Activated CD4-positive, alpha-beta T cell treated with anti-CD3 and anti-CD28 coated beads, Interleukin-2, amount 10 ng/mL, durations not matched to agents 24 days and 14 days (primary cell): ENCODE measurements at regions of chr14 and their contacts with region 1.

Region 1: GRCh38 chr14:55102141-55102621 is 26.9 kb upstream of the LGALS3 start:
- DNase-seq: peak; percentile 84
- H3K4me3 Mint-ChIP-seq: peak overlapping the region; percentile 73
- H3K27ac Mint-ChIP-seq: peak overlapping the region; percentile 94
- H3K4me1 Mint-ChIP-seq: peaks cover 46% of the 10 kb centered on the region
- H3K27me3 Mint-ChIP-seq: no peaks in the 10 kb centered on the region

Region 2: GRCh38 chr14:54669721-54670561 is 432.2 kb before region 1 on chr14:
- intact Hi-C with region 1: no loop called
- DNase-seq: peak; percentile 71
- H3K4me3 Mint-ChIP-seq: peak overlapping the region; percentile 6
- H3K27ac Mint-ChIP-seq: peak overlapping the region; percentile 8
- H3K4me1 Mint-ChIP-seq: peaks cover 29% of the 10 kb centered on the region
- H3K27me3 Mint-ChIP-seq: peaks cover 22% of the 10 kb centered on the region

Region 3: GRCh38 chr14:54908190-54908589 is 194.0 kb before region 1 on chr14:
- intact Hi-C with region 1: no loop called
- DNase-seq: peak; percentile 78
- H3K4me3 Mint-ChIP-seq: peak overlapping the region; percentile 66
- H3K27ac Mint-ChIP-seq: peak overlapping the region; percentile 85
- H3K4me1 Mint-ChIP-seq: peaks cover 29% of the 10 kb centered on the region
- H3K27me3 Mint-ChIP-seq: no peaks in the 10 kb centered on the region

Region 4: DNA sequence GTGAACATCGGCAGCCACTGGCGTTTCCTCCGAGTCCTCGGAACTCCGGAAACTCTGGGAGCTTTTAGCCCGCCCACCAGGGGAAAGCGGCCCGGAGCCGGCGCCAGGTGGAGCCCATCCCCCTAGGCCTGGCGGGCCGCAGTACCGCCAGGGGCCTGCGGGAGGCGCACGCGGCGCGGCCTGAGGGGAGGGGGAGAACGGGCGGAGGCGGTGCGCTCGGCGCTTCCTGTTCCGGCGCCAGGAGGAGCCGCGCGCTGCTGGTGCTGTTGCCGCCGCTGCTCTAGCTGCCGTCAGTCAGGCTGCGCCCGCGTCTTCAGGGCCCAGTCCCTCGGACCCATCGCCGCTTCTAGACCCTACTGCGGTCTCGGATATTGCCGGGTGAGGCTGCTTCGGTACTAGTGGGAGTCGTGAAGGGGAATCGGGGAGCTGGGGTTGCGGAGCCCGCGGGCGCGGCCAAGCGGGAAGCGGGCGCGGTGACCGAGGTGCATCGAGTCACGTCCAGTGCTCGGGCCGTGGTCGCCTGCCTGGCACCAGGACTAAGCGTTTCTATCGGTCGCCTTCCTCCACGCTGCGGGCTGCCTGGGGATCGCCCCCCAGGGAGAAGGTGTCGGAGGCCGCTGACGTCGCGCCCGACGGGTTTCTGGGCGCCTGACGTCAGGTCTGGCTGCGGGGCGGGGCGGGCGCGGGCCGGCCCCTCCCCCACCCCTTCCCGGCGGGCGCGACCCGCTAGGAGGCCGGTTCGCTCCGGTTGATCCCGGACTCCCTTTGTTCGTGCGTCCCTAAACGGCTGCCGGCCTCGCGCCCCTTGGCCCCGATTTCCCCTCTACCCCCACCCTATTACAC is 50.5 kb before region 1 on chr14 and contains the start of gene MAPK1IP1L:
- intact Hi-C with region 1: loop called (anchors 2 kb)
- DNase-seq: peak; percentile 98
- H3K4me3 Mint-ChIP-seq: peak within 1 kb of the TSS; percentile 93
- H3K27ac Mint-ChIP-seq: peak within 1 kb of the TSS; percentile 96
- H3K4me1 Mint-ChIP-seq: peaks cover 36% of the 10 kb centered on the region
- H3K27me3 Mint-ChIP-seq: no peaks in the 10 kb centered on the region
- total RNA-seq, gene MAPK1IP1L: 142 and 144 TPM in 2 replicates

Region 5: DNA sequence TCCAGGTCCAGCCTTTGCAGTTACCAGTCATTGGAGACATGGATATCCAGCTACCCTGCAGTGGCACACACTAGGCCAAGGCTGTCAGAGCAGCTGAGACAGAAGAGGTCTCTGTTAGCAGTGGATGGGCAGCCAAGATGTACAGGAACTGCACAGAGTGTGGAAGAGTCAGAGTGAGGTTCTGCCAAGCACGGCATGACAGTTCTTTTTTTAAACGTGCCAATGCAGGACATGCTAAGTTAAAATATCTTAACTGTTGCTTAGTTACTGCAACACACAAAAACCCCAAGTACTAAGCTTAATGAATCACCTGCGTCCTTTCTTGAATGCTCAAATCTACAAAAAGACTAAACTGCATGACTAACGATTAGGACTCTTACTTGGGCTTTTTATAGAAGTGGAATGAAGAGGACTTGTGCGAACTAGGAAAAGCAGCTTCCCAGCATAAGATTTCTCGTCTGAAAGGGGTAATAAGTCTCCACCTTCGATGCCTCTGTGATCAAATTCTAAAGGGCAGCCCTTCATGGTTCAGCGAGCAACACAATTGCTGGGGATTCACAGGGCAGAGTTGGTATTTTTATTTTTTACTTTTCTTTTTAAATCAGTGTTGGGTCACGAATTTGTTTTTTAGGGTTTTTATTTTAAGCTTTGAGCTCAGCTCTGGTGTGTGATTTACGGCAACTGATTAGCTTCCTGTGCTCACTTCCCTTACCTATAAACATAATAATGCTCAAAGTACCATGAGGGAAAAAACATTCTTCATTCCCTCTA is 30.1 kb before region 1 on chr14:
- intact Hi-C with region 1: no loop called
- DNase-seq: peak; percentile 60
- H3K4me3 Mint-ChIP-seq: peak overlapping the region; percentile 45
- H3K27ac Mint-ChIP-seq: peak overlapping the region; percentile 61
- H3K4me1 Mint-ChIP-seq: peaks cover 23% of the 10 kb centered on the region
- H3K27me3 Mint-ChIP-seq: no peaks in the 10 kb centered on the region

Region 6: GRCh38 chr14:55129428-55130195 is 27.4 kb after region 1 on chr14:
- intact Hi-C with region 1: loop called (anchors 1 kb)
- DNase-seq: peak; percentile 83
- H3K4me3 Mint-ChIP-seq: peak overlapping the region; percentile 82
- H3K27ac Mint-ChIP-seq: peak overlapping the region; percentile 63
- H3K4me1 Mint-ChIP-seq: peaks cover 29% of the 10 kb centered on the region
- H3K27me3 Mint-ChIP-seq: peaks cover 20% of the 10 kb centered on the region

Region 7: GRCh38 chr14:55333711-55334485 is 231.7 kb after region 1 on chr14:
- intact Hi-C with region 1: loop called (anchors 10 kb)
- DNase-seq: no peak
- H3K4me3 Mint-ChIP-seq: peak overlapping the region; percentile 77
- H3K27ac Mint-ChIP-seq: peak overlapping the region; percentile 87
- H3K4me1 Mint-ChIP-seq: peaks cover 68% of the 10 kb centered on the region
- H3K27me3 Mint-ChIP-seq: no peaks in the 10 kb centered on the region

Region 8: DNA sequence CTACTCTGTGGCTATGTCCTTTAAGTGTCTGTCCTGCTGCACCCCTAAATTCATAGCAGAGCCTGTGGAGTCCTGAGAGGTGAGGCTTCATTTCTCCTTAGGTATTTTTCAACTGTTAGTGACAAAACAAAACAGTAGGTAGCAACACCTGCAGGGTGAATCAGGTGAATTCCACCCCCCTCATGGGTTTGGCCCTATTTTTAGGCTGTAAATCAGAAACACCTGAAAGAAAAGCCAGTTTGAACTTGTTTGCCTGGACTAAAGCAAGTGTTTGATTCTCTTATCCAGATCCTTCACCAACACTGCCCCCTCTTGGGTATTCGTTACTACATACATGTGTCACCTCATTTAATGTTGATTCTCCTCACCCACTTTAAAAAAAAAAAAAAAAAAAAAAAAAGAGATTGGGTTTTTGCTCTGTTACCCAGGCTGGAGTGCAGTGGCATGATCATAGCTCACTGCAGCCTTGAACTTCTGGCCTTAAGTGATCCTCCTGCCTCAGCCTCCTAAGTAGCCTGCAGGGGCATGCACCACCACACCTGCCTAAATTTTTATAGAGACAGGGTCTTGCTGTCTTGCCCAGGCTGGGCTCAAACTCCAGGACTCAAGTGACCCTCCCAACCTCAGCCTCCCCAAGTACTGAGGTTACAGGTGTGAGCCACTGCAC is 328.0 kb after region 1 on chr14:
- intact Hi-C with region 1: loop called (anchors 10 kb)
- DNase-seq: peak; percentile 86
- H3K4me3 Mint-ChIP-seq: no peak overlapping the region
- H3K27ac Mint-ChIP-seq: no peak overlapping the region
- H3K4me1 Mint-ChIP-seq: peaks cover 24% of the 10 kb centered on the region
- H3K27me3 Mint-ChIP-seq: no peaks in the 10 kb centered on the region